Endothelial cell of umbilical vein (primary cell): ENCODE measurements at regions of chrX and their contacts with region 1.

Region 1: GRCh38 chrX:1657367-1658070 is 42.7 kb downstream of the ASMT start:
- DNase-seq: peak; percentile 77
- H3K4me3 ChIP-seq: peak overlapping the region in 2 of 3 experiments; percentile 17 to 60
- H3K27ac ChIP-seq: peak overlapping the region; percentile 38
- H3K4me1 ChIP-seq: peaks cover 8% of the 10 kb centered on the region
- H3K27me3 ChIP-seq: no peaks in the 10 kb centered on the region
- CTCF ChIP-seq: no peak
- POLR2A ChIP-seq: peak; percentile 45

Region 2: DNA sequence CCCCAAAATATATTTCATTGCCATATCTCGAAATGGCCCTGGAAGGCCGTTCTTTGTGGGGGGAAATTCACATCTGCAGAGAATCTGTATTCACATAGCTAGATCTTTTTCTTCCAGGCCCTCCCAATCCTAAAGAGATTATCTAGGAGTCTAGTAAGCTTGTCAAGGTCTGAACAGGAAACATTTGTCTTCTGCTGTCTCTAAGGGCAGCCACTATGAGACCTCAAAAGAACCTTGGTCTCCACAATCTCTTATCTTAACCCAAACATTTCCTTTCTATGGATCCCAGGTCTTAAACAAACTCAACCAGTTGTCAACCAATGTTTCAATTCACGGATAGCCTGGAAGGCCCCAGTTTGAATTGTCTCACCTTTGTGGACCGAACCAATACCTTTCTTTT is 490.1 kb before region 1 on chrX:
- CTCF ChIA-PET with region 1: no interaction called
- POLR2A ChIA-PET with region 1: no interaction called
- dilution Hi-C with region 1: no loop called
- intact Hi-C with region 1: no loop called
- DNase-seq: no peak
- H3K4me3 ChIP-seq: no peak overlapping the region
- H3K27ac ChIP-seq: no peak overlapping the region
- H3K4me1 ChIP-seq: no peaks in the 10 kb centered on the region
- H3K27me3 ChIP-seq: no peaks in the 10 kb centered on the region
- CTCF ChIP-seq: no peak
- POLR2A ChIP-seq: no peak

Region 3: DNA sequence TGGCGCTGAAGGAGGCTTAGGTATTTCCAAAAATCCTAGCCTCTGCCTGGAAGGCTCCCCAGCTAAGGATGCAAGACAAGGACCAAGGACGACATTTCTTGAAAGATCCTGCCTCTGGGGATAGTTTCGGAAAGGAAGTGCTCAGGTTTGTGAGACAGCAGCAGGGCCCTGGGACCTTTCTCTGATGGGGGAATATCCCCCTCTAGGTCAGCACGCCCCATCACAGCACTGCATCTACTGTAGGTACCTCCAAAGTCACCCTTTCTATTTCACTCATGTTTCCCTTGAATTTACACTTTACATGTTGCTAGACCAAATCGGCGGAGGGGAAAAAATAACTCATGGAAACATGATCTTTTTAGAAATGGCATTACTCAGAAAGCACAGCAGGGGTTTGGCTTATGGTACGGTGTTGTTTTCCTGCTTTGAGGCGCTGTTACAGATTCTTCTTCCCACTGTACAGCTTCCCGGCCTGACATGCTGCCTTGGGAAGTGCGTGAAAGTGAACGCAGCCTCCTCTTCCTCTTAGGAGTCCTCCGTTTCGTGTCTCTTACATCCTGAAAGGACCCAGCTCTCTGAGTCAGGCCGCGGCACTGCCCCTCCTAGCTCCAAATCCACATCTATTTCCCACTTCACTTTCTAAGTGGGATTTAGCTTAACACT is 920.5 kb after region 1 on chrX:
- CTCF ChIA-PET with region 1: no interaction called
- POLR2A ChIA-PET with region 1: no interaction called
- dilution Hi-C with region 1: loop called (anchors 25 kb)
- intact Hi-C with region 1: no loop called
- DNase-seq: no peak
- H3K4me3 ChIP-seq: no peak overlapping the region
- H3K27ac ChIP-seq: no peak overlapping the region
- H3K4me1 ChIP-seq: no peaks in the 10 kb centered on the region
- H3K27me3 ChIP-seq: peaks cover 14 to 17% of the 10 kb centered on the region in 2 experiments
- CTCF ChIP-seq: no peak
- POLR2A ChIP-seq: no peak